ENCODE measurements at regions of chr4 and their contacts with region 1.

Region 1: DNA sequence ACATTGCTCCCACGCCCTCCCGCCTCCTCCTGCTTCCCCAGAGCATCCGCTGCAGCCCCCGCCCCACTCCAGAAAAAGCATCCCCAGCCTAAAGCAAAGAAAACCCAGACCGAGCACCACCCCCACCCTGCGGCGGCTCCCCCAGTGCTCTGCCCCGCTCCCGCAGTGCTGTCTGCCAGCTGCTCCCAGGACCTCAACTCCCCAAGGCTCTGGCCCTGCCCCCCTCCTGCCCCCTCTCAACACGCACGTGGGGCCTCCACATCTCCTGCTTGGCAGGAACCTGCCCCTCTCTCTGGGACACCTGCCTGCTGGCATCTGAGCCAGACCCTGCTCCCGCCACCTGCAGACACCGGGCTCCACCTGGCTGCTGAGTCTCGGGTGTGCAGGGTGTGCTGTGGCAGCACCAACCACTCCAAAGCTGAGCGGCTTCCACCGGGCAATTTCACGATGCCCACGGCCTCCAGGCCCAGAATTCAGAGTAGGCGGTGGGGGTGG is 79.4 kb downstream of the FAM53A start:
- DNase-seq: peak; percentile 73
- ATAC-seq: peak; percentile 77
- H3K4me3 Mint-ChIP-seq: peak overlapping the region; percentile 52
- H3K27ac Mint-ChIP-seq: peak overlapping the region; percentile 86
- H3K4me1 Mint-ChIP-seq: peaks cover 21% of the 10 kb centered on the region
- H3K27me3 Mint-ChIP-seq: no peaks in the 10 kb centered on the region

Region 2: GRCh38 chr4:1583051-1583785 is 21.5 kb before region 1 on chr4:
- CTCF ChIA-PET with region 1: interaction called, 10 read pairs
- DNase-seq: no peak
- ATAC-seq: no peak
- H3K4me3 Mint-ChIP-seq: no peak overlapping the region
- H3K27ac Mint-ChIP-seq: no peak overlapping the region
- H3K4me1 Mint-ChIP-seq: peaks cover 7% of the 10 kb centered on the region
- H3K27me3 Mint-ChIP-seq: peaks cover 3% of the 10 kb centered on the region

Region 3: DNA sequence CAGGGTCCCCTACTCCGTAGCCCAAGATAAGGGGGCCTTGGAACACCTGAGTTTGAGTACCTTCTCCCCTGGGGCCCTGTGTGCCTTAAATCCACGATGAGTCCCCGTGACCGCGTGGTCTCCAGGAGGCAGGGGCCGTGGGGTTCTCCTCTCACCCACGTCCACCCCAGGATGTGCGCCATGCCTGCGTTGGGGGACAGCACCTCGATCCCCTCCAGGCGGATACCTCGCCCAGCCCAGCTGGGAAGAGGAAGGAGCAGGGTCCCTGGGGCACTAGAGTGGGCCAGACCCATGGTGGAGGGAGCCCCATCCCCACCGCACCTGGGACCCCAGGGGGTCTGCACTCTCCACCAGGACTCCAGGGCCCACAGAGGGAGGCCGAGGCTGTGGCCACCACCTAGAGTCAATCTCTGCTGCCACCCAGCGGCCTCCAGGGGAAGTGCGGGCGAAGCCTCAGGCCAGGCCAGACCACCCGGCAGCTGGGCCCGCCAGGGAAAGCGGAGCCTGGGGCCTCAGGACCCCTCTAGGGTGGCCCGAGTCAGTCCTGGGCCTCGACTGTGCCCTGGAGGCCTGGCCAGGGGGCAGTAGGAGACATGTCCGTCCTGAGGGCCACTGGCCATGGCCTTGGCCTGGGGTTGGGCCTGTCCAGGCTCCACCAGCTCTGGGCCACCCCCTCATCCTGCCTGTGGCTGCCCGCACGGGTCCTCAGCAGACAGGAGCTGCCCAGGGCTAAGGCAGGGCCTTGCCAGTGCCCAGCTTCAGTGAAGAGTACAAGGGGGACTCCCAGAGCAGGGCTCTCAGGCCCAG is 24.3 kb after region 1 on chr4:
- CTCF ChIA-PET with region 1: interaction called, 12 read pairs
- DNase-seq: peak; percentile 78
- ATAC-seq: peak; percentile 85
- H3K4me3 Mint-ChIP-seq: no peak overlapping the region
- H3K27ac Mint-ChIP-seq: no peak overlapping the region
- H3K4me1 Mint-ChIP-seq: no peaks in the 10 kb centered on the region
- H3K27me3 Mint-ChIP-seq: no peaks in the 10 kb centered on the region

Measured in activated CD8-positive, alpha-beta memory T cell treated with anti-CD3 and anti-CD28 coated beads, Interleukin-2, amount 10 ng/mL, durations not matched to agents 7 days and 5 days (primary cell).